ENCODE measurements at regions of chr12 and their contacts with region 1.

Region 1: DNA sequence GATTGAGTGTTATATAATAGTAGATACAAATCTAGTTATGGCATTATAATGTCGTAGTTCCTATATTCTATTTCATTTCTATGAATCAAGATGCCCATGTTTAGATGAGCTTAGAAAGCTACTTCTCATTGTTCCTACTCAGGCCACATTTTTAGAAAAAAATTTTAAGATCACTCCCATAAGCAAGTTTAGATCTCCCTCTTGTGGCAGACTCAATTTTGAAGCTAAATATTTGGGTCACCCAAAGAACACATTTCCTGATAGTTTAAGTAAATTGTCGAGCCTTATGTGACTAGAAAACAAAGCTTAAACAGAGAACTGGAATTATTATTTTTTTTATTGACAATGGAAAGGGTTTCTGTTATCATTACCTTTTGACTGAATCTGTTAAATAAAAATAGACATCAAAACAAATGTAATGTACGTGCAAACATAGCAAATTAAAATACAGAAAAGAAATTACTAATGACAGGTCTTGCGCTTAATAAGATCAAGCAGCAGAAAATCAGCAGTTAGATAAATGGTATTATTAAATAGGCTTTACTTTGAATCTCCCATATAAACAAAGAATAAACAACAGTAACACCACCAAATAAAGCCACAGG is 180.2 kb downstream of the ACSS3 start:
- DNase-seq: peak; percentile 26
- H3K4me3 ChIP-seq: no peak overlapping the region
- H3K27ac ChIP-seq: no peak overlapping the region
- H3K4me1 ChIP-seq: no peaks in the 10 kb centered on the region
- H3K27me3 ChIP-seq: no peaks in the 10 kb centered on the region
- CTCF ChIP-seq: peak; percentile 43 to 63

Region 2: GRCh38 chr12:80837348-80837985 is 420.6 kb before region 1 on chr12:
- CTCF ChIA-PET with region 1: no interaction called
- dilution Hi-C with region 1: no loop called
- in situ Hi-C with region 1: loop called in 1 of 2 experiments (anchors 25 kb)
- intact Hi-C with region 1: loop called (anchors 1 kb)
- DNase-seq: peak; percentile 24
- H3K4me3 ChIP-seq: no peak overlapping the region
- H3K27ac ChIP-seq: no peak overlapping the region
- H3K4me1 ChIP-seq: no peaks in the 10 kb centered on the region
- H3K27me3 ChIP-seq: no peaks in the 10 kb centered on the region
- CTCF ChIP-seq: peak; percentile 78 to 79

Region 3: GRCh38 chr12:81147292-81147919 is 110.6 kb before region 1 on chr12:
- CTCF ChIA-PET with region 1: no interaction called
- dilution Hi-C with region 1: no loop called
- in situ Hi-C with region 1: no loop called
- intact Hi-C with region 1: loop called (anchors 1 kb)
- DNase-seq: no peak
- H3K4me3 ChIP-seq: no peak overlapping the region
- H3K27ac ChIP-seq: no peak overlapping the region
- H3K4me1 ChIP-seq: no peaks in the 10 kb centered on the region
- H3K27me3 ChIP-seq: no peaks in the 10 kb centered on the region
- CTCF ChIP-seq: no peak

Region 4: GRCh38 chr12:81296556-81297305 is 38.7 kb after region 1 on chr12:
- CTCF ChIA-PET with region 1: no interaction called
- dilution Hi-C with region 1: no loop called
- in situ Hi-C with region 1: no loop called
- intact Hi-C with region 1: no loop called
- DNase-seq: peak; percentile 17
- H3K4me3 ChIP-seq: no peak overlapping the region
- H3K27ac ChIP-seq: no peak overlapping the region
- H3K4me1 ChIP-seq: no peaks in the 10 kb centered on the region
- H3K27me3 ChIP-seq: no peaks in the 10 kb centered on the region
- CTCF ChIP-seq: no peak

Measured in mammary epithelial cell (primary cell).